A673 (cell line): ENCODE measurements at regions of chr10 and their contacts with region 1.

Region 1: GRCh38 chr10:101042667-101043355 is 11.8 kb downstream of the SFXN3 start:
- DNase-seq: peak; percentile 93
- H3K4me3 ChIP-seq: peak overlapping the region; percentile 54
- H3K27ac ChIP-seq: peak overlapping the region; percentile 84
- H3K4me1 ChIP-seq: peaks cover 37% of the 10 kb centered on the region
- H3K27me3 ChIP-seq: no peaks in the 10 kb centered on the region
- CTCF ChIP-seq: no peak

Region 2: DNA sequence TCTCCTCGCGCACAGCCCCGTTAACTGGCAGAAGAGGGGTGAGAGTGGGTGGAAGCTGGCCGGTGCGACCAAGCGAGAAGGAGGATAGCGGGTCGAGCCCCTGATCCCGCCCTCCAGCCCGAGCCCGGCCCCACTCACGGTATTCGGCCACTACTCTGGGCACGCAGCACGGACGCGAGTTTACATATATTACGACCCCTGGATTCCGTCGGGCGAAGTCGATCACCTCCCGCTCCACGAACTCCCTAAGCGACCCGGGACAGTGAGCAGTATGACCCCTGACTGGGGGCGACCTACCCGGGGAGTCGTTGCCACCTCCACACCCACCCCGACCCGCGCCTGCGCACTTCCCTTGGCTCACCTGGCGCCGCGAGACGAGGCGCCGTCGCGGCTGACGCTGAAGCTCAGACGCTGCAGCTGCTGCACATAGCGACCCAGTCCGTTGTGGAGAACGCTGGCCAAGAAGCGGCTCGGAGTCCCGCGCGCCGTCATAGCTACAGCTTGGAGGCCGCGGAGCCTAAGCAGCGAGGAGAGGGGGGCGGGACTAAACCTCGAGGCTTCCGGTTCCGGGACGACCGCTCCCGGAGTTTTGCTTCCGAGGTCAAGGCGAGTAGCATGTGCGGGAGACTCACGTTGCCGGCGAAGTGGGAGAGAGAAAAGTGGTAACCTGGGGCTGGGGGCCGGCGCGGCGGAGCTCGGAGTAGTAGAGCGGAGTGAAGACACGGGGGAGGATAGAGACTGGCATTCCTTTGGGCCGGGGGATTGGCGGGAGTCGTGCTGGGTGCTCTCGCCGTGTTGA is 55.7 kb before region 1 on chr10 and contains the starts of genes MRPL43 and TWNK:
- CTCF ChIA-PET with region 1: interaction called, 11 read pairs
- POLR2A ChIA-PET with region 1: no interaction called
- intact Hi-C with region 1: no loop called
- DNase-seq: peak; percentile 90
- H3K4me3 ChIP-seq: peak within 1 kb of the TSS; percentile 93
- H3K27ac ChIP-seq: peak within 1 kb of the TSS; percentile 83
- H3K4me1 ChIP-seq: peaks cover 24% of the 10 kb centered on the region
- H3K27me3 ChIP-seq: no peaks in the 10 kb centered on the region
- CTCF ChIP-seq: no peak
- total RNA-seq, gene MRPL43: 80.4 and 88.8 TPM in 2 replicates
- total RNA-seq, gene TWNK: 29.5 and 30.8 TPM in 2 replicates

Region 3: GRCh38 chr10:101076630-101077029 is 33.8 kb after region 1 on chr10:
- CTCF ChIA-PET with region 1: interaction called, 12 read pairs
- POLR2A ChIA-PET with region 1: no interaction called
- intact Hi-C with region 1: no loop called
- DNase-seq: no peak
- H3K4me3 ChIP-seq: no peak overlapping the region
- H3K27ac ChIP-seq: no peak overlapping the region
- H3K4me1 ChIP-seq: no peaks in the 10 kb centered on the region
- H3K27me3 ChIP-seq: peaks cover 17% of the 10 kb centered on the region
- CTCF ChIP-seq: no peak

Region 4: GRCh38 chr10:101818872-101819633 is 776.2 kb after region 1 on chr10:
- CTCF ChIA-PET with region 1: no interaction called
- POLR2A ChIA-PET with region 1: no interaction called
- intact Hi-C with region 1: no loop called
- DNase-seq: no peak
- H3K4me3 ChIP-seq: peak overlapping the region; percentile 98
- H3K27ac ChIP-seq: peak overlapping the region; percentile 88
- H3K4me1 ChIP-seq: peaks cover 10% of the 10 kb centered on the region
- H3K27me3 ChIP-seq: no peaks in the 10 kb centered on the region
- CTCF ChIP-seq: no peak